WTC11 (cell line): ENCODE measurements at regions of chr3 and their contacts with region 1.

Region 1: DNA sequence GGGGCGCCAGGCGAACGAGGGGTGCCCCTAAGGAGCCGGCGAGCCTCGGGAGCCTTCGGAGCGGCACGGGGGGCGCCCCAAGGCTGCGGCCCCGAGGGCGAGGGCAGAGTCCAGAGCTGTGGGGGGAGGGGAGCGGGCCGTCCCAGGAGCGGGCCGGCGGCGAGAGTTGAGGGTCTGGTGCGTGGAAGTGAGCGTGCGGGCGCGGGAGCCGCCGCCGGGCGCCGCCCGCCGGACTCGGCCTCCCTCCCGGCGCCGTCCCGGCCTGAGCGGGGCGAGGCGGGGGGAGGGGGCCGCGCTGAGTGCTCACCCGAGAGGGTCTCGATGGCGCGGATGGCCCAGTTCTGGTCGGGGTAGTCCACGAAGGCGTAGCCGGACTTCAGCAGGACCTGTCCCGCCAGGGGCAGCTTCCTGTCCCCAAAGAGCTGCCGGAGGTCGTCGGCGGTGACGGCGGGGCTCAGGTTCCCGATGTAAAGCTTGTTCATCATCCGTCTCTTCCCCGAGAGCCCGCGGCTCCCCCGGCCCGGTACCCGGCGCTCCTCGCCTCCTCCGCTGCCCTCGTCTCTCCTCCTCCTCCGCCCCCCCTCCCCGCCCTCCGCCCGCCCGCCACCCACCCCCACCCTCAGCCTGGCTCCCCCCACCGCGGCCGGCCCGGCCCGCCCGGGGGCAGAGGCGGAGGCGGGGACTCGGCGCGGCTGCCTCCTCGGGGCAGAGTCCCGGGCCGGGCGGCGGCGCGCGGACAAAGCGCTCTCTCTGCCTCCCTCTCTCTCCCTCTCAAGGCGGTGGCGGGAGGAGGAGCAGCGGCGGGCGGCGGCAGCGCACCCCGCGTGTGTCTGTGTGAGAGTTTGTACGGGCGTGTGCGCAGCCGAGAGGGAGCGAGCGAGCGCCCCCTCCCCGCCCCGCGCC is at the start of gene IGF2BP2:
- DNase-seq: peak; percentile 81
- ATAC-seq: peak; percentile 63
- H3K4me3 Mint-ChIP-seq: peak within 1 kb of the TSS; percentile 89
- H3K27ac Mint-ChIP-seq: peak within 1 kb of the TSS; percentile 88
- H3K4me1 Mint-ChIP-seq: peaks cover 42% of the 10 kb centered on the region
- H3K27me3 Mint-ChIP-seq: peaks cover 16% of the 10 kb centered on the region
- CTCF ChIP-seq: no peak
- total RNA-seq, gene IGF2BP2: 133 to 157 TPM (median 150 TPM) in 3 replicates

Region 2: GRCh38 chr3:185702262-185703225 is 122.2 kb before region 1 on chr3:
- CTCF ChIA-PET with region 1: no interaction called
- POLR2A ChIA-PET with region 1: no interaction called
- DNase-seq: no peak
- ATAC-seq: peak; percentile 76
- H3K4me3 Mint-ChIP-seq: peak overlapping the region; percentile 12
- H3K27ac Mint-ChIP-seq: peak overlapping the region; percentile 89
- H3K4me1 Mint-ChIP-seq: peaks cover 37% of the 10 kb centered on the region
- H3K27me3 Mint-ChIP-seq: no peaks in the 10 kb centered on the region
- CTCF ChIP-seq: no peak

Region 3: DNA sequence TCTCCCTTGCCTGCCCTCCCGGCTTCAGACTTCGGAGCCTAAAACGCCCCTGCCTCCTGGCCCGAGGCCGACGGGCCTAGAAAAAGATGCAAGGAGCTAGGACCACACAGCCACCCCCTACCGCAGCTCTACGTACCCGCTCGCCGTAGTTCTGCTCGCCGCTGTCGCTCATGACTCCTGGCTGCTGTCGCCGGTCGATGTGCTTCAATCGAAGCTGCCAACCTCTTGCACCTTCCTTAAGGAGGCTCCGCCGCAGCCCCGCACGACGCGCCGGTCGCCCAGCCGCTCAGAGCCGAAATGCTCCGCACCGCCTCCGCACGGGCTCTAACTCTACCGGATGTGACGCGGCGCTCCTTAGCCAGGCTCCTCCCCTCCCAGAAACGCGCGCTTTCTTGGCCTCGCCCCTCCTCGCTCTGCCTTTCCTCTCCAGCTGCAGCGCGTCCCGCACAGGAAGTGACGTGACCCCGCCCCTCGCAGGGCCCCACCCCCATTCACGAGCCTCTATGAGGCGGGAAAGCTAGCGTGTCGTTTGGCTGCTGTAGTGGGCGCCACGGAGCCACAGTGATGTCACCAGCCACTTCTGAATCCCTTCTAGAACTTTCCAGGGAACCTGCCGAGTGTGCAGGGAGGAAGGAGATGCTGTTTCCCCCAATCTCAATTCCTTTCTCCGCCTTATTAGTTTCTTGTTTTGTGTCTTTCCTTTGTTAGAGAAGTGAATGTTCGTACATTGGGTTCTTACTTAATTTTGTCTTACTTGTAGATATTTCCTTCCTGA is 113.1 kb after region 1 on chr3 and contains the start of gene TRA2B:
- CTCF ChIA-PET with region 1: no interaction called
- POLR2A ChIA-PET with region 1: interaction called, 13 read pairs
- DNase-seq: peak; percentile 98
- ATAC-seq: peak; percentile 93
- H3K4me3 Mint-ChIP-seq: peak within 1 kb of the TSS; percentile 100
- H3K27ac Mint-ChIP-seq: peak within 1 kb of the TSS; percentile 100
- H3K4me1 Mint-ChIP-seq: peaks cover 28% of the 10 kb centered on the region
- H3K27me3 Mint-ChIP-seq: peaks cover 11% of the 10 kb centered on the region
- CTCF ChIP-seq: no peak
- total RNA-seq, gene TRA2B: 214 to 240 TPM (median 236 TPM) in 3 replicates